CD8-positive, alpha-beta T cell (primary cell): ENCODE measurements at regions of chr2 and their contacts with region 1.

Region 1: DNA sequence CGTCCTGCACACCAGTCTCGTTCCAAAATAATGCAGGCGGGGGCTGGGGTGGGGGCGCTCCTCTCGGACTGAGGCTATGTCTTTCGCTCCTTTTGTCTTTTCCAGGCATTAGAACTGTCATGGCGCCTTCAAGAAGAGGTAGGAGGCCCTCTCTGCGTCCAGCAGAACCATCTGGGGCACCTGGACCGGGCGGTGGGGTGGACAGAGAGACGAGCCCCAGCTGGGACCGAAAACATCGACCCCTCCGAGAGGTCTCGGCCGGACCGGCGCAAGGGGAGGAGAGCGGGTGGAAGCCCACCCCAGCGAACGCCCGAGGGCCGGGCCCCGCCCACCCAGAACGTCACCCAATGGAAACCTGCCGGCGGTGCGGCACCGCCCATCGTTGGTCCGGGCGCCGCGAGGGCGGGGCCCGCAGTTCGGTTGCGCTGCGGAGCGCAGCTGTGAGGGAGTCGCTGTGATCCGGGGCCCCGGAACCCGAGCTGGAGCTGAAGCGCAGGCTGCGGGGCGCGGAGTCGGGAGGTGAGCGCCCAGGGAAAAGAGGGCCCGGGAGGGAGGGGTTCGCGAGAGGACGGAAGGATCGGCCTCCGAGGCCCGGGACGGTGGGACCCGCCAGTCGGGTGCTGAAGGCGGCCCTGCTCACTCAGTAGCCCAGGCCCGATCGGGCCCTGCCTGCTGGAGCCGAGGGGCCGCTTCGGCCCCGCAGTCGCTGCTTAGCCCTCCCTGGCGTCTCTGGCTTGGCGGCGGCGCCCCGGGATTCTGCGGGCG is at the start of gene NRBP1:
- DNase-seq: peak; percentile 80 to 95 (median 91)
- ATAC-seq: peak; percentile 91
- H3K4me3 ChIP-seq: peak within 1 kb of the TSS; percentile 81 to 92
- H3K4me3 Mint-ChIP-seq: peak within 1 kb of the TSS; percentile 97
- H3K27ac ChIP-seq: peak within 1 kb of the TSS; percentile 79 to 90
- H3K27ac Mint-ChIP-seq: peak within 1 kb of the TSS; percentile 97
- H3K4me1 ChIP-seq: peaks cover 29% of the 10 kb centered on the region
- H3K4me1 Mint-ChIP-seq: peaks cover 38% of the 10 kb centered on the region
- H3K27me3 ChIP-seq: no peaks in the 10 kb centered on the region
- H3K27me3 Mint-ChIP-seq: no peaks in the 10 kb centered on the region
- CTCF ChIP-seq: no peak
- total RNA-seq, gene NRBP1: 192 to 196 TPM

Region 2: DNA sequence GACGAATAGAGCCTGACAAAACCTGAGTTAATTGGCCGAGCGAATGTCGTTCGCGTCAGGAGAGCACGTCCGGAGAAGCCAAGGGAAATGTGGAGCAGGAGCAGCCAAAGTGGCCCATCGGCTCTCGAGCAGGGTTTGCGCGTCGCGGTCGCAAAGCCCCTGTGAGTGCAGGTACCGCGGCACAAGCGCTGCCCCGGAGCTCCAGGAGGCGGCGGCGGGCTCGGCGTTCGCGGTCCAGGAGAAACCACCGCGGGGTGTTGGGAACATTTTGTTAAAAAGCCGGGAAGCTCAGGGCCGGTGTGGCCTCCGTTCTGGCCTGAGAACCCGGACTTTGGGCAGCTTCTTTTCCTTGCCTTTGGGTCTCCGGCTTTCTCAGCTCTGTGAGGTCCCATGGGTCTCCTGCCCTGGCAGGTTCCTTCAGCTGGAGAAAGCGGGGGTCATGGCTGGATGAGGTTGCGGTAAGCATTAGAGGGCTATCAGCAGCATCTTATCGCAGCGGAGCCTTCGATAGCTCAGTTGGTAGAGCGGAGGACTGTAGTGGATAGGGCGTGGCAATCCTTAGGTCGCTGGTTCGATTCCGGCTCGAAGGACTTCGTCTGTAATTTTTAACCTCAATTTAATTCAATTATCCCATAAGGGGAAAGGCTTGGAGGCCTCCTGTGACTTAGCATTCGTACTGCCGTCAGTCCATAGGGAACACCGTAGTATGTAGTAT is 378.0 kb before region 1 on chr2:
- CTCF ChIA-PET with region 1: no interaction called
- POLR2A ChIA-PET with region 1: no interaction called
- intact Hi-C with region 1: loop called in 1 of 2 experiments (anchors 5 kb)
- DNase-seq: peak; percentile 85 to 97 (median 93)
- ATAC-seq: peak; percentile 64
- H3K4me3 ChIP-seq: peak overlapping the region; percentile 78 to 83
- H3K4me3 Mint-ChIP-seq: peak overlapping the region; percentile 99
- H3K27ac ChIP-seq: peak overlapping the region; percentile 74 to 88
- H3K27ac Mint-ChIP-seq: peak overlapping the region; percentile 99
- H3K4me1 ChIP-seq: peaks cover 10% of the 10 kb centered on the region
- H3K4me1 Mint-ChIP-seq: peaks cover 9% of the 10 kb centered on the region
- H3K27me3 ChIP-seq: no peaks in the 10 kb centered on the region
- H3K27me3 Mint-ChIP-seq: peaks cover 2% of the 10 kb centered on the region
- CTCF ChIP-seq: peak; percentile 28

Region 3: DNA sequence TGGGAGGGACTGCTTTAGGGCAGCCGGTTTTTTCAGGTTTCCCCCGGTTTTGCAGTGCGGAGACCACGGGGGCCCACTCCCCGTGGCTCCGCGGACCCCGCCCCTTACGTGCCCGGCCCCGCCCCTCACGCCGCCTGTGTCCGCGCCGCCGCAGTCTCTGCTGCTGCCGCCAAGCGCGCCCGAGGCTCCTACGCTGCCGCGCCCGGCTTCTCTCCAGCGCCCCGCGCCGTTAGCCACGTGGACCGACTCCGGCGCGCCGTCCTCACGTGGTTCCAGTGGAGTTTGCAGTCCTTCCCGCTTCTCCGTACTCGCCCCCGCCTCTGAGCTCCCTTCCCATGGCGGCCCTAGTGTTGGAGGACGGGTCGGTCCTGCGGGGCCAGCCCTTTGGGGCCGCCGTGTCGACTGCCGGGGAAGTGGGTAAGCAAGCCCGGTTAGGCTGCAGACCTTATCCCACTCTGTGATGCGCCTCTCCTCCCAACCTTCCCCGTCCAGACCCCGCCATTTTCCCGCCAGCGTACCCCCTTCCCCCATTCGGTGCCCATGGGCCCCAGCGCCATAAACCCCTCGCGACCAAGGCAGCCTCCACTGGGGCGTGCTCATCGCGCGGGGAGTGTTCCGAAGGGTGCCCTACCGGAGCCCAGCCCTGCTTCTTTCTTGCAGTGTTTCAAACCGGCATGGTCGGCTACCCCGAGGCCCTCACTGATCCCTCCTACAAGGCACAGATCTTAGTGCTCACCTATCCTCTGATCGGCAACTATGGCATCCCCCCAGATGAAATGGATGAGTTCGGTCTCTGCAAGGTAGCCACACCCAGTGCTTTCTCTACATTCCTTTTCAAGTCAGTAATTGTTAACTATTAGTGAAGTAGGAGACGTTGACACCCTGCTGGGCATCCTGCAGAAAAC is 210.9 kb before region 1 on chr2 and contains the start of gene CAD:
- CTCF ChIA-PET with region 1: no interaction called
- POLR2A ChIA-PET with region 1: no interaction called
- intact Hi-C with region 1: loop called (anchors 5 kb)
- DNase-seq: peak; percentile 69 to 92 (median 85)
- ATAC-seq: peak; percentile 77
- H3K4me3 ChIP-seq: peak within 1 kb of the TSS; percentile 84
- H3K4me3 Mint-ChIP-seq: peak within 1 kb of the TSS; percentile 96
- H3K27ac ChIP-seq: peak within 1 kb of the TSS; percentile 66 to 78
- H3K27ac Mint-ChIP-seq: peak within 1 kb of the TSS; percentile 94
- H3K4me1 ChIP-seq: peaks cover 25% of the 10 kb centered on the region
- H3K4me1 Mint-ChIP-seq: peaks cover 45% of the 10 kb centered on the region
- H3K27me3 ChIP-seq: no peaks in the 10 kb centered on the region
- H3K27me3 Mint-ChIP-seq: no peaks in the 10 kb centered on the region
- CTCF ChIP-seq: no peak
- total RNA-seq, gene CAD: 24.7 to 31.4 TPM

Region 4: GRCh38 chr2:27356382-27357181 is 71.8 kb before region 1 on chr2 and contains the start of gene GTF3C2:
- CTCF ChIA-PET with region 1: no interaction called
- POLR2A ChIA-PET with region 1: no interaction called
- intact Hi-C with region 1: loop called (anchors 1 kb)
- DNase-seq: peak; percentile 82 to 97 (median 93)
- ATAC-seq: peak; percentile 76
- H3K4me3 ChIP-seq: peak within 1 kb of the TSS; percentile 94 to 95
- H3K4me3 Mint-ChIP-seq: peak within 1 kb of the TSS; percentile 98
- H3K27ac ChIP-seq: peak within 1 kb of the TSS; percentile 87 to 95
- H3K27ac Mint-ChIP-seq: peak within 1 kb of the TSS; percentile 99
- H3K4me1 ChIP-seq: peaks cover 35% of the 10 kb centered on the region
- H3K4me1 Mint-ChIP-seq: peaks cover 51% of the 10 kb centered on the region
- H3K27me3 ChIP-seq: no peaks in the 10 kb centered on the region
- H3K27me3 Mint-ChIP-seq: no peaks in the 10 kb centered on the region
- CTCF ChIP-seq: no peak
- total RNA-seq, gene GTF3C2: 52.2 to 56.2 TPM

Region 5: GRCh38 chr2:27409321-27410073 is 18.9 kb before region 1 on chr2 and contains the start of gene PPM1G:
- CTCF ChIA-PET with region 1: interaction called, 5 read pairs
- POLR2A ChIA-PET with region 1: interaction called, 26 read pairs
- intact Hi-C with region 1: loop called (anchors 1 kb)
- DNase-seq: peak; percentile 91 to 98 (median 97)
- ATAC-seq: peak; percentile 96
- H3K4me3 ChIP-seq: peak within 1 kb of the TSS; percentile 51 to 98
- H3K4me3 Mint-ChIP-seq: peak within 1 kb of the TSS; percentile 88
- H3K27ac ChIP-seq: peak within 1 kb of the TSS; percentile 84 to 90
- H3K27ac Mint-ChIP-seq: peak within 1 kb of the TSS; percentile 97
- H3K4me1 ChIP-seq: peaks cover 21% of the 10 kb centered on the region
- H3K4me1 Mint-ChIP-seq: peaks cover 39% of the 10 kb centered on the region
- H3K27me3 ChIP-seq: no peaks in the 10 kb centered on the region
- H3K27me3 Mint-ChIP-seq: no peaks in the 10 kb centered on the region
- CTCF ChIP-seq: no peak
- total RNA-seq, gene PPM1G: 36.4 to 38.5 TPM

Region 6: GRCh38 chr2:27464443-27464842 is 36.0 kb after region 1 on chr2:
- CTCF ChIA-PET with region 1: no interaction called
- POLR2A ChIA-PET with region 1: no interaction called
- intact Hi-C with region 1: no loop called
- DNase-seq: no peak
- ATAC-seq: no peak
- H3K4me3 ChIP-seq: no peak overlapping the region
- H3K4me3 Mint-ChIP-seq: no peak overlapping the region
- H3K27ac ChIP-seq: no peak overlapping the region
- H3K27ac Mint-ChIP-seq: no peak overlapping the region
- H3K4me1 ChIP-seq: no peaks in the 10 kb centered on the region
- H3K4me1 Mint-ChIP-seq: no peaks in the 10 kb centered on the region
- H3K27me3 ChIP-seq: no peaks in the 10 kb centered on the region
- H3K27me3 Mint-ChIP-seq: no peaks in the 10 kb centered on the region
- CTCF ChIP-seq: no peak

Region 7: GRCh38 chr2:27494944-27495554 is 66.7 kb after region 1 on chr2 and contains the start of gene FNDC4:
- CTCF ChIA-PET with region 1: no interaction called
- POLR2A ChIA-PET with region 1: no interaction called
- intact Hi-C with region 1: no loop called
- DNase-seq: peak in 4 of 9 experiments; percentile 28 to 51 (median 46)
- ATAC-seq: peak; percentile 73
- H3K4me3 ChIP-seq: peak within 1 kb of the TSS; percentile 31 to 47
- H3K4me3 Mint-ChIP-seq: peak within 1 kb of the TSS; percentile 73
- H3K27ac ChIP-seq: no peak within 1 kb of the TSS
- H3K27ac Mint-ChIP-seq: no peak within 1 kb of the TSS
- H3K4me1 ChIP-seq: peaks cover 15% of the 10 kb centered on the region
- H3K4me1 Mint-ChIP-seq: peaks cover 16% of the 10 kb centered on the region
- H3K27me3 ChIP-seq: peaks cover 20 to 25% of the 10 kb centered on the region in 2 experiments
- H3K27me3 Mint-ChIP-seq: peaks cover 48% of the 10 kb centered on the region
- CTCF ChIP-seq: no peak
- total RNA-seq, gene FNDC4: 0.19 to 0.49 TPM

Region 8: DNA sequence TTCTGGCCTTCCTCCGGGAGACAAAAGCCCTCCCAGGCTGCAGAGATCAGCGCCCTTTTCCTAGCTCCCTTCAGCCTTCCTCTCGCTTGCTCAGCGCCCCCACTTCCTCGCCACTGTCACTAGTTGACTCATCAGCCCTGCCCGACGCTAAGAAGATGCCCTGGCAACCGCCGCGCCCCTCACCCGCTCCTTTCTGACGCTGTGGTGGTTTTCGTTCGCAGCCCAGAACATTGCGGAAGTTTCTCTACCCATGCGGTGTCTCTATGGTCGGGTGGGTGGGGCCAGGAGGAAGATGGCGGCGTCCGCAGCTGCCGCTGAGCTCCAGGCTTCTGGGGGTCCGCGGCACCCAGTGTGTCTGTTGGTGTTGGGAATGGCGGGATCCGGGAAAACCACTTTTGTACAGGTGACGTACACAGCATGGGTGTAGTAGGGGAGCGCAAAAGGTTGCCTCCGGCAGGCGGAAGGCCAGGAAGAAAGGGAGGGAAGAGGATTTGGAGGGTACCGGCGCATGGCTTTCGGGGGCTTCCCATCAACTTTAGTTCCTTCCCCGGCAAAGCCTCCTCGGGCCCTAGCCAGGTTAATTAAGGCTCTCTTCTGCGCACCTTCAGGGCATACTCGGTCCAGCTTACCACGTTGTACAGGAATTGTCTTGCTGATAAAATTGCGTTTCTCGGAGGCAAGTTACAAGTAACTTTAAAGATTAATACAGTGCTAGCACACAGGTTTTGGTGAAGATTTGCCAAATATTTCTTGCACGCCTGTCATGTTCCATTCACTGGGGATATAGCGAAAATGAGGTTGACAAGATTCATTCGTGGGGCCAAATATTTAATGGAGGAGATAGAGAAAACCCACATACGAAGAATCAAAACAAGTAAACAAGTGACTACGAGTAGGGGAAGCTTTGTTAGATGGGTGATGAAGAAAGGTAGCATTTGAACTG is 200.6 kb after region 1 on chr2 and contains the starts of genes CCDC121 and GPN1:
- CTCF ChIA-PET with region 1: no interaction called
- POLR2A ChIA-PET with region 1: no interaction called
- intact Hi-C with region 1: loop called (anchors 1 to 5 kb)
- DNase-seq: peak; percentile 88 to 97 (median 95)
- ATAC-seq: peak; percentile 98
- H3K4me3 ChIP-seq: peak within 1 kb of the TSS; percentile 94 to 98
- H3K4me3 Mint-ChIP-seq: no peak within 1 kb of the TSS
- H3K27ac ChIP-seq: peak within 1 kb of the TSS; percentile 84 to 91
- H3K27ac Mint-ChIP-seq: peak within 1 kb of the TSS; percentile 46
- H3K4me1 ChIP-seq: peaks cover 18% of the 10 kb centered on the region
- H3K4me1 Mint-ChIP-seq: peaks cover 20% of the 10 kb centered on the region
- H3K27me3 ChIP-seq: no peaks in the 10 kb centered on the region
- H3K27me3 Mint-ChIP-seq: no peaks in the 10 kb centered on the region
- CTCF ChIP-seq: no peak
- total RNA-seq, gene CCDC121: 0.92 to 1.4 TPM
- total RNA-seq, gene GPN1: 40.6 to 41.7 TPM